ENCODE measurements at regions of chr5 and their contacts with region 1.

Region 1: DNA sequence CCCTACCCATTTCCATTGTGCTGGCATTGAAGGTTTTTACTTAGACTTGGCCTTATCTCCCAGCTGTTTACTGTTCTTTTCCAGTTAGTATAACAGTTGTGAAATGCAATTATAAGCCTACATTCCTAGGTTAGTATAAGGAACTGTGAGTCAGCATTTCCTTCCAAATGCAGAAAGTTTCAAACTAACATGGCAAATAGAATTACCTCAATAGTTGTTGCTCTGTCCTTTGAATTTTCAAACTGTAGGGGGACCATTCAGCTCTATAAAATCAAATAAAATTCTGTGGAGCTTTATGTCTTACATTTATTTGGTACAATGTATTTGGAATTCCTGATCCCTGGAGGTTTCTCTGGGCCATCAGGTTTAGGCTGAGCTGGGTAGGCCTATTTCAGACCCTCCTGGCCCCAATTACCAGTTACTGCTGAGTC is 47.2 kb downstream of the ARHGEF28 start:
- DNase-seq: peak; percentile 51
- H3K4me3 ChIP-seq: no peak overlapping the region
- H3K27me3 ChIP-seq: no peaks in the 10 kb centered on the region
- CTCF ChIP-seq: no peak

Region 2: DNA sequence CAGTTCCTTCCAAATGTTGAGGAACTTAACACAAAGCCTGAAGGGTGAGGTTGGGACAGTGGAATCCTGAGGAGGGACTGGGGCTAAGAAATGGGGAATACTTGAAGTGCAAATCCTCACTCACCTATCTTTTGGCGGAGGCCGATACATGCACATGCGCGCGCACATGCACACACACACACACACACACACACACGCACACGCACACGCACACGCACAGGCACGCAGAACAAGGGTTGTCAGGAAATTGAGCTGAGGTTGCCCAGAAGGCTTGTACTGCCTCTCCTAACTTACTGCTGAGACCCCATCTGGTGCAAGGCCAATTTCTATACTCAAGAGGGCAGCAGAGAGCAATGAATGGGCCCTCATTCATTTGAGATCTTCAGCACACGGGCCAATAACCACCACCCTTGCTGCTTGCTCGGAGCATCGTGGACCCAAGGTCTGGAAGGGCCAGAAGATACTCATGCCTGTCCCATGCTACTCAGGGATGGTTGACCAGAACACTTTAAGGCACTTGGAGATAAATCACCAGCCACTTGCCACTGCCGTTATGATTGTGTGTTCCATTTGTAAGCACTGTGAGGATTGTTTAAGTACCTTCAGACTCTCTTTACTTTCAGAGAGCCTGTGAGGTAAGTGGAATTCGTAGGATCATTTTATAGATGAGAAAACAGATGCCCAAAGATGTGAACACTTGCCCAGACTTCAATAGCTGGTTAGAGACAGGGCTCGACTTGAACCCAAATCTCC is 153.5 kb before region 1 on chr5:
- CTCF ChIA-PET with region 1: no interaction called
- POLR2A ChIA-PET with region 1: no interaction called
- DNase-seq: no peak
- H3K4me3 ChIP-seq: no peak overlapping the region
- H3K27me3 ChIP-seq: no peaks in the 10 kb centered on the region
- CTCF ChIP-seq: peak; percentile 85

Region 3: DNA sequence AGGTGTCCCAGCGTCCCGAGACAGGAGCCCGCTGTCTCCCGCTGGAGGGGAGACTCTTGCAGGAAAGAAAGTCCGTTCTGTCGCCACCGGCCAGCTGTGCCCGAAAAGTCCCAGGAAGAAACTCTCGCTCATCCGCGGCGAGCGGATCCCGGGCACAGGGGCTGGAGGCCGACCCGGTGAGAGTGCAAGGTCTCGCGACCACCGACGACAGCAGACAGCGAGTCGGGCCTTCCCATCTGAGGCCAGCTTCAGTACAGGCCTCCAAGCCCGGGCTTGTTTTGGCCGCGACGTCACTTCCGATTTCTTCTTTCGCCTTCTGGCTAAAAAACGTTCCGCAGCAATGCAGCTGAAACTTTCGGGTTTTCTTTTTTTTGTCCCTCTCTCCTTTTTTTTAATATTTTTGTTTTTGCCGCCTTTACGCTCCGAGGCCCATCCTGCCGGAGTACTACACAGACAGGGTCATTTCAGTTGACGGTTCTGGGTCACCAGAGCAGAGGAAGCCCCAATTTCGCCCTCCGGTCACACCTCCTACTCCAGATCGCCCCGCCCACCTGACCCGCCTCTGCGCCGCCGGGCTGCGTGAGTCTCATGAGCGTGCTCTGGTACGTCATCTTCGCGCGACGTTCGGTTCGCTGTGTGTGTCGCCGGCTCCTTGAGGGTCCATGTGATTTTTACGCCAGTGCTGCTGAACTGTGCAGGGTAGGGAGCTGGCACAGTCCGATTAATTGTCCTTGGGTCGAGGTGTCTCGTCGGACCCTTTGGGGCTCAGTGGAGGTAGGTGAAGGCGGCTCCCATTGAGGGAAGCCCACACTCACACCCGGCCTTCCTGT is 107.8 kb before region 1 on chr5 and contains the starts of genes ANKRA2 and UTP15:
- CTCF ChIA-PET with region 1: no interaction called
- POLR2A ChIA-PET with region 1: no interaction called
- DNase-seq: peak; percentile 69
- H3K4me3 ChIP-seq: peak within 1 kb of the TSS; percentile 89
- H3K27me3 ChIP-seq: no peaks in the 10 kb centered on the region
- CTCF ChIP-seq: no peak
- polyA plus RNA-seq, gene ANKRA2: 14.8 and 28.4 TPM in 2 replicates
- polyA plus RNA-seq, gene UTP15: 8.8 and 11.0 TPM in 2 replicates

Region 4: GRCh38 chr5:73693481-73694061 is 20.4 kb after region 1 on chr5:
- CTCF ChIA-PET with region 1: interaction called, 13 read pairs
- POLR2A ChIA-PET with region 1: no interaction called
- DNase-seq: no peak
- H3K4me3 ChIP-seq: no peak overlapping the region
- H3K27me3 ChIP-seq: no peaks in the 10 kb centered on the region
- CTCF ChIP-seq: peak; percentile 59

Region 5: DNA sequence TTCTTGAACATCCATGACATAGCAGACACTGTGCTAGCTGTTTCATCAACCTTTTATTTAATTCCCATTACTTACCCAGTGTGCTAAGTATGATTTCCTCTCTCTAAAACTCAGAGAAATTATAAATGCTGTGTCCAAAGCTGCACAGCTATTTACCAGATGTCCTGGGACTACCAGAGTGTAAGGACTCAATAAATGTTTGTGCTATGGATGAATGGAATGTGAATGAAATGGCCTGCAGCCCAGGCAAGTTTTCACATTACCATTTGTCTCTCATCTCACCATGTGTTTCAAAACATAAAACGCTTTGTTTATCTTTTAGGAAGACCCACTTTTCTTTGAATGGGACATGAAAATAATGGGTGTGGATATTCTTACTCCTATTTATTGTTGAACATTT is 49.1 kb after region 1 on chr5:
- CTCF ChIA-PET with region 1: no interaction called
- POLR2A ChIA-PET with region 1: no interaction called
- DNase-seq: peak; percentile 35
- H3K4me3 ChIP-seq: no peak overlapping the region
- H3K27me3 ChIP-seq: no peaks in the 10 kb centered on the region
- CTCF ChIP-seq: no peak